ENCODE measurements at regions of chr4 and their contacts with region 1.

Region 1: DNA sequence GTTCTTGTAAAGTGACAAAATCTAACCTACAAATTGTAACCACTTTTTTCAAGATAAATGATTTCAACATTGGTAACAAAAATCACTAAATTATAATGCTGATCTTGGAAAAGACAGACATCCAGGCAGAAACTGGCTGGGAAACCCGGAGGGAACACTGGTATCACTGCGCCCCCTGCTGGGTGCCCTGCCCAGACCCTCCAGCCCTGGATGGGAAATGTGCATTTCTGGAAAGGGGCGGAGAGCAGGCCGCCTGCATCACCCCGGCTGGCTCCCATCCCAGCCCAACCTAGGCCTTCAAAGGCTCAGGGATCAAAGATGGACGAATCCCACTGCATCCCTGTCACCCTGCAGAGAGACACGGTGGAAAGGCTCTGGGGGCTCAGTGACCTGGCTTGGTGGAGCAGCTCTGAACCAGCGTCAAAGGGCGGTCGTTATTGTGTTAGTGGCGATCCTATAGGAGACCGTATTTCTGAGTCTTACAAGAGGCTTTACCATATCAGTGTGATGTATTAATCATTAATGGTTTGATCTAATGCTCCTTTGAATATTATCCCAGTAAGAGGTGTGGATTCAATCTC is 37.3 kb downstream of the ACOX3 start:
- DNase-seq: peak; percentile 55 to 90
- H3K4me3 ChIP-seq: no peak overlapping the region
- H3K4me1 ChIP-seq: no peaks in the 10 kb centered on the region
- H3K27me3 ChIP-seq: no peaks in the 10 kb centered on the region

Region 2: GRCh38 chr4:8176547-8177399 is 226.5 kb before region 1 on chr4:
- in situ Hi-C with region 1: loop called (anchors 10 kb)
- DNase-seq: peak; percentile 51 to 65
- H3K4me3 ChIP-seq: no peak overlapping the region
- H3K4me1 ChIP-seq: no peaks in the 10 kb centered on the region
- H3K27me3 ChIP-seq: 0 out of 2 replicates have a peak, but pooled peaks cover under 1% of the 10 kb centered on the region

Region 3: DNA sequence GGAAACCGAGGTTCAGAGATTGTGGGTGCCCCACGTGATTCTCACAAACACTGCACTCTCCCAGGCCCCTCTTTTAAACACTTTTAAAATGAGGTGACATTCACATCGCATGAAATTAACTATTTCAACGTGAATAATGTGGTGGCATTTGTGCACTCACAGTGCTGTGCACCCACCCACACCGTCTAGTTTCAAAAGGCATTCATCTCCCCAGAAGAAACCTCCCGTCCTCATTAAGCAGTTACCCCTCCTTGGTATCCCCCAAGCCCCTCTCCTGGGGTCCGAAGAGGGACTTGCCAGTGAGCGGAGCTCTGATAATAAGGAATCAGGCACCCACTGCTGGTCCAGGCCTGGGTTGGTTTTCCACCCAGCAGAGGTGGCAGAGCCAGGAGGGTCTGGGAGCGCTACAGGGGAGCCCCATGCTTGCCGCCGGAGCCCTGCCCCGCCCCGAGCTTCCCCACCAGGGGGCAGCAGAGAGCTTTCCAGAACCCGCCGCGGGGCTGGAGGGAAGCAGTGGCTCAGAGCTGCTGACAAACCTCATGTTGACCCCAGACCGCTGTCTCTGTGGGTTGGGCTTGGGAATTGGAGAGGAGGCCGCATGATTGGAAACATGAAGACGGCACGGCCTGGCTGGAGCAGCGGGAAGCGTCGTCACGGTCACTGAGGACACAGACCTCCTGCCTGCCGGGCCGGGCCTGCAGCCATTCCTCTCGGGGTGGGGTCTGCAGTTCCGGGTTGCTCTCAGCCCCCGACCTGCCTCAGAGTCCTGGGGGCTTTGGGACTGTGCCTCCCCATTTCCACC is 161.2 kb before region 1 on chr4:
- in situ Hi-C with region 1: loop called (anchors 5 kb)
- DNase-seq: peak; percentile 76 to 93
- H3K4me3 ChIP-seq: no peak overlapping the region
- H3K4me1 ChIP-seq: peaks cover 2% of the 10 kb centered on the region; the same call in 1 of the 2 replicates
- H3K27me3 ChIP-seq: no peaks in the 10 kb centered on the region

Region 4: GRCh38 chr4:8882239-8882638 is 479.0 kb after region 1 on chr4:
- in situ Hi-C with region 1: no loop called
- DNase-seq: no peak
- H3K4me3 ChIP-seq: no peak overlapping the region
- H3K4me1 ChIP-seq: no peaks in the 10 kb centered on the region
- H3K27me3 ChIP-seq: peaks cover 18% of the 10 kb centered on the region